ENCODE measurements at regions of chr2 and their contacts with region 1.

Region 1: GRCh38 chr2:30231212-30231995 is at the start of gene LBH:
- DNase-seq: peak; percentile 80 to 87
- ATAC-seq: peak; percentile 71 to 87 (median 78)
- H3K4me3 ChIP-seq: peak within 1 kb of the TSS; percentile 72
- H3K27ac ChIP-seq: peak within 1 kb of the TSS; percentile 62
- H3K4me1 ChIP-seq: peaks cover 10% of the 10 kb centered on the region
- H3K27me3 ChIP-seq: peaks cover 0 to 44% (median 18%) of the 10 kb centered on the region in 3 donors
- CTCF ChIP-seq: no peak
- total RNA-seq, gene LBH: 11.1 to 15.5 (median 14.2) TPM

Region 2: GRCh38 chr2:29977284-29977683 is 254.1 kb before region 1 on chr2:
- intact Hi-C with region 1: no loop called
- DNase-seq: no peak
- ATAC-seq: no peak
- H3K4me3 ChIP-seq: no peak overlapping the region
- H3K27ac ChIP-seq: no peak overlapping the region
- H3K4me1 ChIP-seq: no peaks in the 10 kb centered on the region
- H3K27me3 ChIP-seq: peaks cover 0 to 2% (median 0%) of the 10 kb centered on the region in 3 donors
- CTCF ChIP-seq: no peak

Region 3: GRCh38 chr2:30346471-30347169 is 115.2 kb after region 1 on chr2:
- intact Hi-C with region 1: loop called in 1 of 2 experiments (anchors 10 kb)
- DNase-seq: peak; percentile 56 to 61
- ATAC-seq: peak; percentile 44 to 73 (median 70)
- H3K4me3 ChIP-seq: peak overlapping the region; percentile 40
- H3K27ac ChIP-seq: peak overlapping the region; percentile 18
- H3K4me1 ChIP-seq: no peaks in the 10 kb centered on the region
- H3K27me3 ChIP-seq: no peaks in the 10 kb centered on the region
- CTCF ChIP-seq: no peak

Region 4: DNA sequence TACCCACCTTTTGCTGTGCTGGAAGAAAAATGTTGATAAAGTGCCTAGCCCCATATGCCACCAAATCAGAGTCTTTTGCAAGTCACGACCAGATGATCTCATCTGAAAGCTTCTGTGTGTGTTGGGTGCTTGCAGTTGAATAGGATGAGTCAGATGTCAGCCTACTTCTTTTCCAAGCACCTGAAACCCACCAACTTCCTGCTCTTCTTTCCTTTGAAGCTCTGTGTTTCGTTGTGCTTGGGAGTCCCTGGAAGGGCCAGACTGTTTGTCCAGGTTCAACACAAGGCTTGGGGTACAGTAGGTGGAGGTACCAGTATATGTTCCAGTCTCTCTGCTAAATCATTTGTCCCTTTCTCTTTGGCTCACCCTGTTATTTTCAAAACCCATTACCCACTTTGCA is 178.8 kb after region 1 on chr2:
- intact Hi-C with region 1: loop called in 1 of 2 experiments (anchors 10 kb)
- DNase-seq: no peak
- ATAC-seq: no peak
- H3K4me3 ChIP-seq: no peak overlapping the region
- H3K27ac ChIP-seq: no peak overlapping the region
- H3K4me1 ChIP-seq: peaks cover 7% of the 10 kb centered on the region
- H3K27me3 ChIP-seq: no peaks in the 10 kb centered on the region
- CTCF ChIP-seq: no peak

Measured in psoas muscle (tissue), 8 donors.